CD8-positive, alpha-beta T cell (primary cell): ENCODE measurements at regions of chr12 and their contacts with region 1.

Region 1: DNA sequence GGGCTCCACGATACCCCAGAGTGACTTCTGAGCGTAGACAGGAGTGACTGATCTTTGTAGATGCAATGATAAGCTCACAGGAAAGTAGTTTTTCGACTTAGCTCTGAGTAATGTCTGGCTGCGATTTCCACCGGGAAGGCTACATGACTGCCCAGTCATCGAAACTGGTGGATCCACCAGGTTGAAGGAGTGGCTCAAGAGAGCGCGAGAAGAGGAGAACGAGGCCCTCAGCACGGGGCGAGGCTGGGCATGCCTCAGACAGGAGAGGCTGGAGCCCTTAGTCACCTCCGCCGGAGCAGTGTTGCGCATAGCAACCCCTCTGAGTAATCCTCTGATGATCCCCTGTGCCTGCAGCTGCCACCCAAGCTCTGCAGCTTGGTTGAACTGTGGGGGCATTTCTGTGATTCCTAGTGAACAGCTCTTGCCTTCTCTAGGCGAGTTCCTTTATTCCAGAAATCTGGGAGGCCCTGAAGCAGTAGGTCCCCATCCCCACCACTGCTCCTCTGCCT is 25.6 kb downstream of the ELK3 start:
- DNase-seq: peak in 1 of 9 experiments; percentile 45
- ATAC-seq: no peak
- H3K4me3 ChIP-seq: no peak overlapping the region
- H3K4me3 Mint-ChIP-seq: no peak overlapping the region
- H3K27ac ChIP-seq: no peak overlapping the region
- H3K27ac Mint-ChIP-seq: no peak overlapping the region
- H3K4me1 ChIP-seq: peaks cover 10% of the 10 kb centered on the region
- H3K4me1 Mint-ChIP-seq: peaks cover 21% of the 10 kb centered on the region
- H3K27me3 ChIP-seq: no peaks in the 10 kb centered on the region
- H3K27me3 Mint-ChIP-seq: no peaks in the 10 kb centered on the region
- CTCF ChIP-seq: no peak

Region 2: DNA sequence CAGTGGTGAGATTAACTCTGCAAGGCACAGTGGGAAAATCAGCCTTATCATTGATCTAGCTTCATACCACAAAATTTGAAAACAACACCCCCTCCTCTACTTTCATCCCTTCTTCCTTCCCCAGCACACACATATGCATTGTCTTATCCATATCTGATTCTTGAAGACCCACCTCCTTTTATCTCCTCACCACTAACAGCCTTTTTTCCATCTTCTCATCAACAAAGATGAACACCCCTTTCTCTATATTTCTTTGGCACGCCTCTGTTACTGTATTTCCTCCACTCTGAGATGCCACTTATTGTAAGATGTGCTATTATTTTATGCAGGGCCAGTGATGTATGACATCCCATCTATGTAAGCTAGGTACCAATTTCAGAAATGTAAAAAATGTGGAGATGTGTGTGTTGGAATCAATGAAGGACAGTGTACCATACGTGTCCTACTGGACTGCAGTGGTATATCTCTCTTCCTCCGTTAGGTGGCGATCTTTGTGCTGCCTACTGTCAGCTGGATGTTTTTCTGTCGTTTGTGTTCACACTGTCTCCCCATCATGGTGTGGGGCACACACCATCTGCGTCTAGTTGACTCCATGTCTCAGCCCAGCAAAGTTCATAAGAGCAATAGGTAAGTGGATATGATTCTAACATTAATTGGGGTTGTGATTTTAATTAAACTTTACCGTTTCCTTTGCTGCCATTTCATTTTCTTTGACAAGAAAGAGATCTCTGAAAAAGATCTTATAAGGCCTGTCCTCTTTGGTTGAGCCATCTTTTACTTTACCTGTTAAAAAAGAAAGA is 301.4 kb before region 1 on chr12:
- CTCF ChIA-PET with region 1: interaction called, 8 read pairs
- POLR2A ChIA-PET with region 1: no interaction called
- intact Hi-C with region 1: loop called in 1 of 2 experiments (anchors 10 kb)
- DNase-seq: peak in 8 of 9 experiments; percentile 3 to 77 (median 45)
- ATAC-seq: peak; percentile 99
- H3K4me3 ChIP-seq: no peak overlapping the region
- H3K4me3 Mint-ChIP-seq: no peak overlapping the region
- H3K27ac ChIP-seq: no peak overlapping the region
- H3K27ac Mint-ChIP-seq: no peak overlapping the region
- H3K4me1 ChIP-seq: no peaks in the 10 kb centered on the region
- H3K4me1 Mint-ChIP-seq: no peaks in the 10 kb centered on the region
- H3K27me3 ChIP-seq: no peaks in the 10 kb centered on the region
- H3K27me3 Mint-ChIP-seq: no peaks in the 10 kb centered on the region
- CTCF ChIP-seq: peak; percentile 81

Region 3: DNA sequence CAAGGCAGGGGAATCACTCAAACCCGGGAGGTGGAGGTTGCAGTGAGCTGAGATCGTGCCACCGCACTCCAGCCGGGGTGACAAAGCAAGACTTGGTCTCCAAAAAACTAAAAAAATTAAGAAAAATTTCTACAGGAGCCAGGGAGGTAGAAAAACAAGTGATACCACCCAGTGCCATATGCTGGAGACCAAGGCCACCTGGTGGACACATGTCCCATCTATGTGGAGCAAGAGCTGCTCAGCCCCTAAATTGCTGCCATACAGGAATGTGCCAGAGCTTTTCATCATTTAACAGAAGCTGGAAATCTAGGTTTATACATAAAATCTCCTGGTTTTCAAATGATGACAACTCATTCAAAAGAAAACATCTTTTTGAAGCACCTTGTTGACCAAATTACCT is 86.9 kb before region 1 on chr12:
- CTCF ChIA-PET with region 1: interaction called, 44 read pairs
- POLR2A ChIA-PET with region 1: interaction called, 3 read pairs
- intact Hi-C with region 1: loop called in 1 of 2 experiments (anchors 2 kb)
- DNase-seq: peak in 4 of 9 experiments; percentile 15 to 34 (median 16)
- ATAC-seq: no peak
- H3K4me3 ChIP-seq: no peak overlapping the region
- H3K4me3 Mint-ChIP-seq: no peak overlapping the region
- H3K27ac ChIP-seq: no peak overlapping the region
- H3K27ac Mint-ChIP-seq: no peak overlapping the region
- H3K4me1 ChIP-seq: no peaks in the 10 kb centered on the region
- H3K4me1 Mint-ChIP-seq: peaks cover 6% of the 10 kb centered on the region
- H3K27me3 ChIP-seq: no peaks in the 10 kb centered on the region
- H3K27me3 Mint-ChIP-seq: peaks cover 13% of the 10 kb centered on the region
- CTCF ChIP-seq: no peak

Region 4: GRCh38 chr12:96194971-96195844 is 24.5 kb before region 1 on chr12:
- CTCF ChIA-PET with region 1: interaction called, 16 read pairs
- POLR2A ChIA-PET with region 1: interaction called, 4 read pairs
- intact Hi-C with region 1: loop called in 1 of 2 experiments (anchors 2 kb)
- DNase-seq: peak; percentile 37 to 93 (median 73)
- ATAC-seq: peak; percentile 70
- H3K4me3 ChIP-seq: peak overlapping the region; percentile 87 to 95
- H3K4me3 Mint-ChIP-seq: peak overlapping the region; percentile 94
- H3K27ac ChIP-seq: peak overlapping the region; percentile 74 to 77
- H3K27ac Mint-ChIP-seq: peak overlapping the region; percentile 97
- H3K4me1 ChIP-seq: peaks cover 43% of the 10 kb centered on the region
- H3K4me1 Mint-ChIP-seq: peaks cover 64% of the 10 kb centered on the region
- H3K27me3 ChIP-seq: no peaks in the 10 kb centered on the region
- H3K27me3 Mint-ChIP-seq: no peaks in the 10 kb centered on the region
- CTCF ChIP-seq: no peak

Region 5: DNA sequence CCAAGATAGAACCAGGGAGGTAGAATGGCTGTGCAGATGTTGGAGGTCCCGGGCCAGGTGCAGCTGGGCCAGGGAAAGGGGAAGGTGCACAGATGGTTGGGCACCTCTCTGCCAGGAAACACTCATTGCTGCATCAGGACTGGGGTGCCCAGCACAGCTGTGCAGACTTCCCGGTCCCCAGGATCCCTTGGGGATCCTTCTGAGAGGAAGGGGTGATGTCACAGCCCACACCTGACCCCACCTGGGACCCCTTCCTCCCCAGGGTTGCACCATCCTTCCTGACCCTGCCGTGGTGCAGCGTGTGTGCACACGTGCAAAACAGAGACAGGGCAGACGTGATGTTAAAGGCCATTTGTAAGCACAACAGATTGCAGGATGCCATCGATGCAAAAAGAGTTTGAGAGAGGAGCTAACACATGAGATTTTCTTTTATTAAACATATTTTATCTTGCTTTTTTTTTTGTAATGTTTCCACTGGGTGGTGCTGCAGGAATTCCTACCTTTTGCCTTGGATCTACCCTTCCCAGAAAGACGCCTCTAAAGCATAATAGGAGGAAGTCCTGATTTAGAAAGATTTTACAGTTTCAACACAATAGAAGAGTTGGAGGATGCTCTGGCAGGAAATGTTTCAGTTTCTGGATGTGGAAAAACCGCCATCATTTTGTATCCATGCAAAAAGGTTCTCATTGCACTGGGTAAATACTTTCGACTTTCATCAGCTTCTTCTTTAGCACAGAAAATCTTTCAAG is 10.8 kb before region 1 on chr12:
- CTCF ChIA-PET with region 1: interaction called, 21 read pairs
- POLR2A ChIA-PET with region 1: no interaction called
- intact Hi-C with region 1: no loop called
- DNase-seq: peak in 1 of 9 experiments; percentile 48
- ATAC-seq: no peak
- H3K4me3 ChIP-seq: no peak overlapping the region
- H3K4me3 Mint-ChIP-seq: peak overlapping the region; percentile 30
- H3K27ac ChIP-seq: no peak overlapping the region
- H3K27ac Mint-ChIP-seq: peak overlapping the region; percentile 6
- H3K4me1 ChIP-seq: peaks cover 84% of the 10 kb centered on the region
- H3K4me1 Mint-ChIP-seq: peaks cover 93% of the 10 kb centered on the region
- H3K27me3 ChIP-seq: no peaks in the 10 kb centered on the region
- H3K27me3 Mint-ChIP-seq: no peaks in the 10 kb centered on the region
- CTCF ChIP-seq: no peak

Region 6: GRCh38 chr12:96263449-96263902 is 43.7 kb after region 1 on chr12:
- CTCF ChIA-PET with region 1: interaction called, 10 read pairs
- POLR2A ChIA-PET with region 1: no interaction called
- intact Hi-C with region 1: no loop called
- DNase-seq: no peak
- ATAC-seq: no peak
- H3K4me3 ChIP-seq: no peak overlapping the region
- H3K4me3 Mint-ChIP-seq: no peak overlapping the region
- H3K27ac ChIP-seq: no peak overlapping the region
- H3K27ac Mint-ChIP-seq: peak overlapping the region; percentile 23
- H3K4me1 ChIP-seq: no peaks in the 10 kb centered on the region
- H3K4me1 Mint-ChIP-seq: peaks cover 14% of the 10 kb centered on the region
- H3K27me3 ChIP-seq: no peaks in the 10 kb centered on the region
- H3K27me3 Mint-ChIP-seq: no peaks in the 10 kb centered on the region
- CTCF ChIP-seq: no peak

Region 7: DNA sequence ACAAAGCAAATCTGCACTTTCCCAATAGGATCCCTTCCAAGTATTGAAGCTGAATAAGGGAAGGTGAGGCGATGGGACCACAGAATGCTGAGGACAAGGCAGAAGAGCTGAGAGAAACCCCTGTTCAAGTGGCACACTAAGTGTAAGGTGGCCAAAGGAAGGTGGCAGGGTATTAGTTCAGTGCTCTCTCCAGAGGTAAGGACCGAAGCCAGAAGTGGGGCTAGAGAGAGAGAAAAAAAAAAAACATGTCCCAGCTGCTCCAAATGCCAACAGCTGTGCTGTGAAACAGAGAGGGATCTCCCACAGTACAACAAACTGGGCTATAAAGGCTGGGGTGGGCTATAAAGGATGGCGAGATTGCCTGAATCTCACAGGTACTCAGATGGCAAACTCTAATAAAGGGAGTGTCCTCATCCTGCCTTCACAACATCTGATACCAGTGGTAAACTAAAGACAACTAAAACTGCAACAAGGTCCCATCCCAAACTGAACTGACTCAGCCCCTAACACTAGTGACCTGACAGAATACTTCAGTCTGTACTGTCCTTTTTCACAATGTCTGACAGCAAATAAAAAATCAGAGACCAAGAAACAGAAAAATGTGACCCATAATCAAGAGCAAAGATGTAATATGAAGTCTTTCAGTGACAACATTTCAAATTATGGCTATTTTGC is 132.5 kb after region 1 on chr12:
- CTCF ChIA-PET with region 1: no interaction called
- POLR2A ChIA-PET with region 1: no interaction called
- intact Hi-C with region 1: no loop called
- DNase-seq: peak in 1 of 9 experiments; percentile 20
- ATAC-seq: peak; percentile 31
- H3K4me3 ChIP-seq: no peak overlapping the region
- H3K4me3 Mint-ChIP-seq: no peak overlapping the region
- H3K27ac ChIP-seq: no peak overlapping the region
- H3K27ac Mint-ChIP-seq: no peak overlapping the region
- H3K4me1 ChIP-seq: peaks cover 58% of the 10 kb centered on the region
- H3K4me1 Mint-ChIP-seq: peaks cover 83% of the 10 kb centered on the region
- H3K27me3 ChIP-seq: no peaks in the 10 kb centered on the region
- H3K27me3 Mint-ChIP-seq: no peaks in the 10 kb centered on the region
- CTCF ChIP-seq: no peak

Region 8: DNA sequence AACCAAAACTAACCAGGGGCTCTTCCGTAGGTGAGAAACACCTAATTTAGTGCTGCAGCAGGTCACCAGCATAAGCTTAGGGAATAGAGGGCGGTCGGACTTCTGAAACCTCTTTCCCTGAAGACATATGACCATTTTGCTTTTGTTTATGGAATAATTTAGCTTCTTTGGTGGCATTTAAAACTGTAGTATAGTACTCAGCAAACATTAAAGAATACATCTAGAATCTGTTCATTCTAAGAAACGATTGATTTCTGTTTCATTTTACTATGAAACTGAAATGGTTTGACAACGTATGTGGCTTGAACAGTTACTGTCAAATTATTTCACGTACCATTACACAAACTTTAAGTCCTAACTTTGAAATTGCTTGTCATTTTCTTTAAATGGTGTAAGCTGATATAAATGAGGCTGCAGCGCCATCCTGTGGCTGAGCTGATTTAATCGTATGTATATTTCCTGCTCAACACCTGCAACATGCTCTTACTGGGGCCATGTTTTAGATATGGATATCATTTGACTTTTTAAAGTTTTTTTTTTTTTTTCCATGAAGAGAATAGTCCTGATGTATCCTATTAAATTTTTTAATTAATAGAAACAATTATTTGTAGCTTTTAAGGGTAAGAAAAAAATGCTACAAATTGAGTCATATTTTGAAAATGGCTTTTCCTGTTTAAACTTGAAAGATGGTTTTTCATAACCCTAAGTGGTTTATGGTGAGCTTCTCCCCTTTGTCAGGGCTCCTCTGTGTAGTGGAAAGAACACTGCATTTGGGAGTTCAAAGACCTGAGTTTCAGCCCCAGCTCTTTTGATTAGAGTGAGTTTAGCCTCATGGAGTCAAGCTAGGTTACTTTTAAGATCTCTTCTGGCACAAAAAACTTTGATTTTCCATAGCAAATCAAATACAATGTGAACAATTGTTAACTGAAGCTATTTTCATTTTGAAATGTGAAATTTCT is 297.0 kb after region 1 on chr12:
- CTCF ChIA-PET with region 1: interaction called, 129 read pairs
- POLR2A ChIA-PET with region 1: interaction called, 8 read pairs
- intact Hi-C with region 1: loop called (anchors 1 kb)
- DNase-seq: peak; percentile 73 to 91 (median 88)
- ATAC-seq: peak; percentile 89
- H3K4me3 ChIP-seq: no peak overlapping the region
- H3K4me3 Mint-ChIP-seq: peak overlapping the region; percentile 50
- H3K27ac ChIP-seq: no peak overlapping the region
- H3K27ac Mint-ChIP-seq: no peak overlapping the region
- H3K4me1 ChIP-seq: peaks cover 11% of the 10 kb centered on the region
- H3K4me1 Mint-ChIP-seq: peaks cover 11% of the 10 kb centered on the region
- H3K27me3 ChIP-seq: no peaks in the 10 kb centered on the region
- H3K27me3 Mint-ChIP-seq: no peaks in the 10 kb centered on the region
- CTCF ChIP-seq: peak; percentile 91